ENCODE measurements at regions of chr12 and their contacts with region 1.

Region 1: DNA sequence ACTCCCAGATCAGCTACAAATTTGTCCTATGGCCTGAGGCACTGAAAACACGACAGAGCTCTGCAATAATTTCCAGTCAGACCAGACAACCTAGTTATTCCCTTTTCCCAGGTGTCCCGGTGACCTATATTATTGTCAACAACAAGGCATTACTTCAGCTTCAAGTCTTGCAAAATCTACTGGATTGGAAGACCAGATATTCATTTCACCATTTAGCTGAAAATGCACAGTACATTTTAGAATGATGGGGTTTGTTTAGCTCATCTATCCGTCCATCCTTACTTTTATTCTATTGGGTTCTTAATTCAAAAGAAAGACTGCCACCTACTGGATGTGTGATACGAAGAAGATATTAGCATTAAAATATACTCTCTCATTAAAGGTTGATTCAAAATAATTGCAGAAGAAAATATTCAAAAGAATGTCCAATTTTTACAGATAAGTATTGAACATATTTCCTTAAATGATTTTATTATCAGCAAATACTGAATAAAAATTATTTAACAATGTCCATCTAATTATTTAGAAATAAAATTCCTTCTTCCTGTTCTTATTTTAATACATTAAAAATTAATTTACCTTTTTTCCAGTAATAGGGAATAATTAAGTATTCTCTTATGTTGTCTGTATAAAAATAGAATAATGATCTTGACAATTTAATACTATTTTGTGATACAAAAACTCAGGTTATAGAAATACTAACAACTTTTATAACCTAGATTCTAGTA is 244.9 kb upstream of the LRIG3 start:
- DNase-seq: peak; percentile 64
- ATAC-seq: peak; percentile 57
- H3K4me3 ChIP-seq: no peak overlapping the region
- H3K27ac ChIP-seq: no peak overlapping the region
- H3K4me1 ChIP-seq: peaks cover 18% of the 10 kb centered on the region
- H3K27me3 ChIP-seq: no peaks in the 10 kb centered on the region
- CTCF ChIP-seq: peak; percentile 81

Region 2: DNA sequence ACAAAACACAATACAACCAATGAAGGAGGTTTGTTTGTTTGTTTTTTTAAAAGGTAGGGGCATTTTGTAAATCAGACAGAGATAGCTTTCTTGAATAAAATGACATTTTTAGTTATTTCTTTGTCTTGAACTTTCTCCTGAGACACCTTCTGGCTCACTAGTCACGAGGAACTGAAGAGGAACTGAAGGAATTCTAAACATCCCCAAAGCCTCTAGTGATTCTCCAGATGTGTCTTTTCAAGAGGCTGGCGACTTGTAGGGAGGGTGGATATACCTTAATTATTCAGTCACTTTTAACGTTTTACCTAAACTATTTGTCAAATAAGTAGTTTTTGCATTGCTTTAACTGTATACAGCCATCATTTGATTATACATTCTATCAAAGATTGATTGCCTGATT is 33.7 kb before region 1 on chr12:
- CTCF ChIA-PET with region 1: interaction called, 12 read pairs
- POLR2A ChIA-PET with region 1: no interaction called
- intact Hi-C with region 1: no loop called
- DNase-seq: no peak
- ATAC-seq: no peak
- H3K4me3 ChIP-seq: no peak overlapping the region
- H3K27ac ChIP-seq: no peak overlapping the region
- H3K4me1 ChIP-seq: no peaks in the 10 kb centered on the region
- H3K27me3 ChIP-seq: no peaks in the 10 kb centered on the region
- CTCF ChIP-seq: no peak

Region 3: DNA sequence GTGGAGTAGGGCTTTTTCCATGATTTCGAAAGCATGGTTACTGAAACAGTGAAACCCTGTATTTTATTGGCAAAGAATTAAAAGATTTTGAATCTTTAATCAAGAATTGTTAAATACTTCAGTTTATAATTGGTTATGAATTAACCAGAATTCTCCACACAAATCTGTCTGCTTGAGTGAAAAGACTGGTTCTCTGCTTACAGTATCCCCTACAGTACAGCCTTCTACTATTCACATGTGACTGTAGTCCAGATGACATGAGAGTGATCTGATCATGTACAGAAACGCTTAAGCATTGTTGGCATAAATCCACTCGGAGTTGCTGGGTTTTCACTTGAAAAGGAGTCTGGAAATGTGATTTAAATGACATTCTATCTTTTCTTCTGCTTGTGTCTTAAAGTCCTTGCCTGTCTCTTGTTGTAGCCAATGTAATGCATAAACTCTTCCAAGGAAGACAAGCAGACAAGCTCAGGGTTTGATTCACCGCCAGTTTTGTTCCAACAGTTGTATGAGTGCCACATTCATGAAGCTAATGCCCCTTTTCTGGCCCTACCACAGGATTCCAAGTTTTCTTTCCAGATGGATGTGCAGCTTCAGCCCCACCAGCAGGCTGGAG is 22.9 kb before region 1 on chr12:
- CTCF ChIA-PET with region 1: no interaction called
- POLR2A ChIA-PET with region 1: no interaction called
- intact Hi-C with region 1: no loop called
- DNase-seq: no peak
- ATAC-seq: no peak
- H3K4me3 ChIP-seq: no peak overlapping the region
- H3K27ac ChIP-seq: no peak overlapping the region
- H3K4me1 ChIP-seq: no peaks in the 10 kb centered on the region
- H3K27me3 ChIP-seq: no peaks in the 10 kb centered on the region
- CTCF ChIP-seq: no peak

Measured in PC-3 (cell line).